ENCODE measurements at regions of chr12 and their contacts with region 1.

Region 1: DNA sequence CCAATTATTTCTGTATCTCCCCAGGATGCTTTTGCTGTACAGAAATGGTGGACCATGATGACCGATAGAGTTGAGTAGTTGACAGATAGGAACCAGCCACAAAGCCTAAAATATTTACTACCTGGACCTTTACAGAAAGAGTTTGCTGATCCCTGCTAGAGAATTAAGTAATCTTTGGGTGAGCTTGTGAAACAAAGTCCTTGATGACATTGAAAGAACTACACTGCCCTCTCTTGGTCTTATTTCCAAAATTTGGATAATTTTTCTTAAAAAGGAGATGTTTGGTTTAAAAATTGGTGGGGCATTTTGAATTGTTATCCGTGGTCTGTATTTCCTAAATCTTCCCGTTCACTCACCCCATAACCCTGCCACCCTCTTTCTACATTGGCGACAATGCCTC is 13.7 kb upstream of the TCTN1 start:
- DNase-seq: no peak
- ATAC-seq: peak; percentile 54
- H3K4me3 Mint-ChIP-seq: no peak overlapping the region
- H3K27ac Mint-ChIP-seq: peak overlapping the region; percentile 69
- H3K4me1 Mint-ChIP-seq: peaks cover 44% of the 10 kb centered on the region
- H3K27me3 Mint-ChIP-seq: no peaks in the 10 kb centered on the region
- CTCF ChIP-seq: no peak

Region 2: GRCh38 chr12:110508071-110508586 is 92.1 kb before region 1 on chr12:
- CTCF ChIA-PET with region 1: interaction called, 73 read pairs
- POLR2A ChIA-PET with region 1: interaction called, 4 read pairs
- intact Hi-C with region 1: loop called (anchors 1 kb)
- DNase-seq: no peak
- ATAC-seq: no peak
- H3K4me3 Mint-ChIP-seq: no peak overlapping the region
- H3K27ac Mint-ChIP-seq: no peak overlapping the region
- H3K4me1 Mint-ChIP-seq: peaks cover 2% of the 10 kb centered on the region
- H3K27me3 Mint-ChIP-seq: no peaks in the 10 kb centered on the region
- CTCF ChIP-seq: no peak

Region 3: DNA sequence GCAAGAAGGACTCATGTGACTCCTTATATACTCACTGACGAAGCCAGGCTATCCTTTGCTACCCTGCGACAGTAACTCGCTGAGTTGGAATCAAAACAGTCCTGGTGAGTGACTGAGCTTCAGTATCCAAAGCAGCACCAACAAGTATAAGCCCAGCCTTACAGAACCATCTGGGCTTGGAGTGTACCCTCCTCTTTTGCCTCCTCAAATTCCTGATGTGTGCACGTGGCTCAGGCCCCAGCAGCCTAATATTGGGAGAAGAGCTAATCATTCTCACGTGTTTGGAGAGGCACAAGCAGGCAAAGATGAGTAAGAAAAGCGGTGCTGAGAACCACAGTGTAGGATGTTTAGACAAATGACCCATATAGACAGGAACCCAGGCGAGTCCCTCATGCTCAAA is 51.6 kb before region 1 on chr12:
- CTCF ChIA-PET with region 1: interaction called, 104 read pairs
- POLR2A ChIA-PET with region 1: interaction called, 5 read pairs
- intact Hi-C with region 1: loop called (anchors 1 kb)
- DNase-seq: no peak
- ATAC-seq: no peak
- H3K4me3 Mint-ChIP-seq: no peak overlapping the region
- H3K27ac Mint-ChIP-seq: peak overlapping the region; percentile 21
- H3K4me1 Mint-ChIP-seq: peaks cover 28% of the 10 kb centered on the region
- H3K27me3 Mint-ChIP-seq: no peaks in the 10 kb centered on the region
- CTCF ChIP-seq: no peak

Region 4: GRCh38 chr12:110583137-110584059 is 16.9 kb before region 1 on chr12 and contains the start of gene PPTC7:
- CTCF ChIA-PET with region 1: interaction called, 8 read pairs
- POLR2A ChIA-PET with region 1: interaction called, 6 read pairs
- intact Hi-C with region 1: loop called (anchors 1 kb)
- DNase-seq: peak; percentile 85
- ATAC-seq: peak; percentile 93
- H3K4me3 Mint-ChIP-seq: peak within 1 kb of the TSS; percentile 90
- H3K27ac Mint-ChIP-seq: peak within 1 kb of the TSS; percentile 87
- H3K4me1 Mint-ChIP-seq: peaks cover 70% of the 10 kb centered on the region
- H3K27me3 Mint-ChIP-seq: no peaks in the 10 kb centered on the region
- CTCF ChIP-seq: no peak
- total RNA-seq, gene PPTC7: 34.5 and 40.8 TPM in 2 replicates

Region 5: GRCh38 chr12:110698171-110698902 is 98.1 kb after region 1 on chr12:
- CTCF ChIA-PET with region 1: interaction called, 26 read pairs
- POLR2A ChIA-PET with region 1: interaction called, 9 read pairs
- intact Hi-C with region 1: loop called (anchors 1 kb)
- DNase-seq: peak; percentile 60
- ATAC-seq: peak; percentile 100
- H3K4me3 Mint-ChIP-seq: peak overlapping the region; percentile 61
- H3K27ac Mint-ChIP-seq: peak overlapping the region; percentile 91
- H3K4me1 Mint-ChIP-seq: peaks cover 38% of the 10 kb centered on the region
- H3K27me3 Mint-ChIP-seq: no peaks in the 10 kb centered on the region
- CTCF ChIP-seq: peak; percentile 17

Region 6: GRCh38 chr12:110903511-110903910 is 303.3 kb after region 1 on chr12:
- CTCF ChIA-PET with region 1: no interaction called
- POLR2A ChIA-PET with region 1: no interaction called
- intact Hi-C with region 1: no loop called
- DNase-seq: no peak
- ATAC-seq: no peak
- H3K4me3 Mint-ChIP-seq: no peak overlapping the region
- H3K27ac Mint-ChIP-seq: no peak overlapping the region
- H3K4me1 Mint-ChIP-seq: peaks cover 18% of the 10 kb centered on the region
- H3K27me3 Mint-ChIP-seq: no peaks in the 10 kb centered on the region
- CTCF ChIP-seq: no peak

Measured in activated B cell treated with CpG ODN at 0.5 μM for 24 hours (primary cell).